ENCODE measurements at regions of chr6 and their contacts with region 1.

Region 1: DNA sequence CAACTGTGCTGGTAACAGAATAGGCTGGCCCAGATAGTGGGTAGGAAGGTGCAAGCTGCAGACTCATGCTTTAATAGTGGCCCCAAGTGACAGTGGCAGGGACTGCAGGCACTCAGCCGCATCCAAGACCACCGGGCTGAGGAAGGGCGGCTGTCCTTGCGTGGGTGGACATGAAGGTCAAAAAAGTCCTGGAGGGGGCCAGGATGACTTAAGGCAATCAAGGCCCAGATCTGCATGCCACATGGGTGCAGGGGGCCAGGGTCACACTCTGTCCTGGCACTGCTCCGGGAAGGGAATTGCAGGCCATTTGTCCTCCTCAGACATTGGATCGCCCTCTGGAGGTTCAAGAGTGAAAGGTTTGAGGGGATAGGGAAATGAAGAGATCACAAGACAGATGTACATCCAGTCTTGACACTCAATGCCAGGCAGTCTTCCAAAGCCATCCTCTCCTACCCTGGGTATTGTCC is 10.4 kb upstream of the VNN2 start:
- DNase-seq: peak; percentile 55
- ATAC-seq: peak; percentile 93 to 96
- H3K4me3 ChIP-seq: no peak overlapping the region
- H3K27ac ChIP-seq: no peak overlapping the region
- H3K4me1 ChIP-seq: peaks cover 15% of the 10 kb centered on the region
- H3K27me3 ChIP-seq: no peaks in the 10 kb centered on the region
- CTCF ChIP-seq: peak; percentile 68

Region 2: GRCh38 chr6:132669690-132670291 is 98.3 kb before region 1 on chr6:
- intact Hi-C with region 1: loop called (anchors 10 kb)
- DNase-seq: no peak
- ATAC-seq: peak; percentile 75 to 89
- H3K4me3 ChIP-seq: no peak overlapping the region
- H3K27ac ChIP-seq: no peak overlapping the region
- H3K4me1 ChIP-seq: no peaks in the 10 kb centered on the region
- H3K27me3 ChIP-seq: no peaks in the 10 kb centered on the region
- CTCF ChIP-seq: peak; percentile 59

Region 3: GRCh38 chr6:132931941-132932514 is 163.9 kb after region 1 on chr6:
- intact Hi-C with region 1: no loop called
- DNase-seq: no peak
- ATAC-seq: peak in 1 of 2 donors; percentile 47
- H3K4me3 ChIP-seq: no peak overlapping the region
- H3K27ac ChIP-seq: no peak overlapping the region
- H3K4me1 ChIP-seq: no peaks in the 10 kb centered on the region
- H3K27me3 ChIP-seq: peaks cover 5% of the 10 kb centered on the region
- CTCF ChIP-seq: no peak

Measured in lower lobe of right lung (tissue), 2 donors.